B cell (primary cell): ENCODE measurements at regions of chr20 and their contacts with region 1.

Region 1: DNA sequence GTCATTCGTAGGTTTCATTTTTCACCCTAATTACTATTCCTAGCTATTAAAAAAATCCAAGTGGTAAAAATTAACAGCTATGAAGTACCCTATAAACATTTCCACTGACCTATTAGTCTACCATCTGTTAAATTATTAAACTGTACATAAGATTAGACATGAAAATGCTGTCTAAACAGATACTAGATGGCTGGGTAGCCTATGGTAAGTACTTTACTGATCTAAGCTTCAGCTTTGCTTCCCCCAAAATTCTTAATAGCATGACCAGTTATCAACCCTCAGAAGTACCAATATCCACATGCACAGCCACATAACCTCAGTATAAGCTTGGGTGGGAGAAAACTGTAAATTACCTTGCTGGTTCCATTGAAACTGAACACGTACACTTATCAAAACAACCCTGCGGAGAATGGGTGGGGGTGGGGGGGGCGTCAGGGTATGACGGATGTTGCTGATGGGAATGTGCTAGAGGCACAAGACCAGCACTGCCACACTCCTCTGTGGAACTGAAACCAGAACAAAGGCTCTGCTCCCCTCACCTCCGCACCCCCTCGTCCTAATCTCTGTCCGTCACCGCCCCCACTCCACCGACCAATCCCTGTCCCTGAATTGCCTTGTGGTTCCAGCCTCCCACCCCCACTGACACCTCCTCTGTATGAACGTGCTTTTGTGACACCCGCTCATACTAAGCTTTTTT is 45.3 kb downstream of the B4GALT5 start:
- DNase-seq: peak; percentile 78
- ATAC-seq: peak; percentile 92
- H3K4me3 ChIP-seq: peak overlapping the region in 1 of 5 experiments; percentile 8
- H3K4me3 Mint-ChIP-seq: peak overlapping the region; percentile 81
- H3K27ac ChIP-seq: no peak overlapping the region
- H3K27ac Mint-ChIP-seq: peak overlapping the region; percentile 54
- H3K4me1 ChIP-seq: peaks cover 21 to 22% of the 10 kb centered on the region in 2 donors
- H3K4me1 Mint-ChIP-seq: peaks cover 38% of the 10 kb centered on the region
- H3K27me3 ChIP-seq: no peaks in the 10 kb centered on the region
- H3K27me3 Mint-ChIP-seq: no peaks in the 10 kb centered on the region
- CTCF ChIP-seq: no peak

Region 2: GRCh38 chr20:49620364-49621240 is 47.7 kb before region 1 on chr20:
- CTCF ChIA-PET with region 1: no interaction called
- POLR2A ChIA-PET with region 1: no interaction called
- intact Hi-C with region 1: loop called (anchors 5 kb)
- DNase-seq: peak; percentile 63
- ATAC-seq: peak; percentile 82
- H3K4me3 ChIP-seq: peak overlapping the region in 3 of 5 experiments; percentile 4 to 31 (median 27)
- H3K4me3 Mint-ChIP-seq: no peak overlapping the region
- H3K27ac ChIP-seq: peak overlapping the region; percentile 5 to 16
- H3K27ac Mint-ChIP-seq: no peak overlapping the region
- H3K4me1 ChIP-seq: peaks cover 27 to 37% of the 10 kb centered on the region in 2 donors
- H3K4me1 Mint-ChIP-seq: peaks cover 9% of the 10 kb centered on the region
- H3K27me3 ChIP-seq: peaks cover 0 to 4% (median 0%) of the 10 kb centered on the region in 4 experiments
- H3K27me3 Mint-ChIP-seq: peaks cover 1% of the 10 kb centered on the region
- CTCF ChIP-seq: no peak